ENCODE measurements at regions of chr5 and their contacts with region 1.

Region 1: DNA sequence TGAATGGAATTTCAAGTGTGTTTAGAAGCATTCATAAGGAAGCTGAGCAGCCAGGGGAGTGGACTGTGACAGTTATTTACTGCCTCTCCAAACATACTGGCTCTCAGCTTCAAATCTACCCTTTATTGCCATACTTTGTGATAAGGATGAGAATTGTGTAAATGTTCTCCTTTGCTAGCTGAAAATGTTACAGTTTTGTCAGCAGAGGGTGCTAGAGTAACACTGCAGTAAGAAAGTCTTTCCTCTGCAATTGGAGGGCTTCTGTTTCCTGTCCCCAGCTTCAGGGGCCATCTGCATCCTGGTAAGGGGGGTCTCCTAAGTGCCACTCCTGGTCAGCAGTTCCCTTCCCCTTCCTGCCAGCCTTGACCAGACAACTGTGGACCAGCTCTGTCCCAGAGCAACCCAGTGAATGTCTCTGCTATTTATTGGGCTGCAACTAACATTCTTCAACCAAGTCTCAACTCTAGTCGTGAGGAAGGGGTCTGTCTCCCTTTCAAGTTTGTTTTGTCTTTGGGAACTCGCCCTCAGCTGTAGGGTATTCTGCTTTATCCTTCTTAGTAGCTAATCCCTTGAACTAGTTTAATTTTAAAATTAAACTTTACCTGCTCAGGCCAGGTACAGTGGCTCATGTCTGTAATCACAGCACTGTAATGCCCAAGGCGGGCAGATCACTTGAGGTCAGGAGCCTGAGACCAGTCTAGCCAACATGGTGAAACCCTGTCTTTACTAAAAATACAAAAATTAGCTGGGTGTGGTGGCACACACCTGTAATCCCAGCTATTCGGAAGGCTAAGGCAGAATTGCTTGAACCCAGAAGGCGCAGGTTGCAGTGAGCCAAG is 45.3 kb downstream of the RAPGEF6 start:
- DNase-seq: peak; percentile 20
- ATAC-seq: peak; percentile 93
- H3K4me3 Mint-ChIP-seq: no peak overlapping the region
- H3K27ac Mint-ChIP-seq: no peak overlapping the region
- H3K4me1 Mint-ChIP-seq: peaks cover 22% of the 10 kb centered on the region
- H3K27me3 Mint-ChIP-seq: no peaks in the 10 kb centered on the region
- CTCF ChIP-seq: peak; percentile 60

Region 2: DNA sequence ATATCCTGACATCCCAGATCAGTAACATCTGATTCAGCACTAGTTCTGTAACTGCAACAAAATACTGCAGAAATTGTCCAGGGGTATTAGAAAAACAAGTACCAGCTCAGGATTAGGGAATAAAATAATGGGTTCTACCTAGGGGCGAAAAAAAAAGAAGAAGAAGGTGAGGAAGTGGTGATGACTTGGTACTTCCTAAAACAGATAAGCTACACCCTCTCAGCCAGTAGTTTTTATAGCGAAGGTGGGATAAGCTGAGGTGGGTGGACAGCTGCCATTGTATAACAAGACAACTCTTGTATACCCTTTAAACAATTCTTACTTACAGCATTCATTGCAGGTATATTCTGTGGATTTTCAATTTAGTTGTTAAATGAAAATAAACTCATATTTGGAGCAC is 26.2 kb after region 1 on chr5:
- CTCF ChIA-PET with region 1: interaction called, 11 read pairs
- POLR2A ChIA-PET with region 1: no interaction called
- DNase-seq: no peak
- ATAC-seq: no peak
- H3K4me3 Mint-ChIP-seq: no peak overlapping the region
- H3K27ac Mint-ChIP-seq: no peak overlapping the region
- H3K4me1 Mint-ChIP-seq: peaks cover 16% of the 10 kb centered on the region
- H3K27me3 Mint-ChIP-seq: no peaks in the 10 kb centered on the region
- CTCF ChIP-seq: no peak

Region 3: DNA sequence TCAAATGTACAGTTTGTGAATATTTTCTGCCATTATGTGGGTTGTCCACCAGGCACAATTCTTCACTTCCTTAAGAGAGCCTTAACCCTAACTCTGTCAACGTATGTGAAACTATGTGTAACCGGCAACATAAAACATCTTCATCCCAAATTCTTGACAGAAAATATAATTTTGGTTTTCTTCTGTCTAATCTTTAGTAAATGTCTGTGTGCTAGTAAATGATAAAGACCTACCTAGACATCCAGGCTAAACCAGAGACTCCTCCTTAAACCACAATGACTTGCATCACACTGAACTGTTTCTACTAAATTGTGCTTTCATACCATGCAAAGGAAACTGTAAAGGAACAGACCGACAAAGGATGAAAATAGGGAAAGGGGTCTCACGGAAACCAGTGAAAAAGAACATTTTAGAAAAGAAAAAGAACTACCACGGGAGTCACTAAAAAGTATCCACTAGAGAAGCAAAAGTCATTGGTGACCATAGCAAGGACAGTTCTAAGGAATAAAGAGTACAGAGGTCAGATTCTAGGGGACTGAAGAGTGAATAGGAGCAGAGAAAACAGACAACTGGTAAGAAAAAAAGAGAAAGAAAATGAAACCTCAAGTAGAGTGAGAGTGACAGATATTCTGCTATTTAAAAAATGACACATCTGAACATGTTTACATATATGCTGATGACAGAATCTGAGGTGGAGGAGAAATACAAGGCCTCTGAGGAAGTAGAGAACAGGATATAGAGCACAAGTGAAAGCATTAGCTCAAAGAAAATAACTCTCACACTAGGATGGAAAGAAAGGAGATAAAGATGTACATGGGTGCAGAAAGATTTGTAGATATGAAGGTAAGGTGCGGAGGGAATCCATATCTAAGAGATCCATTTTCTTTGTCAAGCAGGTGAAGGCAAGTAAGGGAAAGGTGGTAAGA is 157.7 kb after region 1 on chr5:
- CTCF ChIA-PET with region 1: no interaction called
- POLR2A ChIA-PET with region 1: no interaction called
- DNase-seq: no peak
- ATAC-seq: no peak
- H3K4me3 Mint-ChIP-seq: no peak overlapping the region
- H3K27ac Mint-ChIP-seq: no peak overlapping the region
- H3K4me1 Mint-ChIP-seq: peaks cover 6% of the 10 kb centered on the region
- H3K27me3 Mint-ChIP-seq: no peaks in the 10 kb centered on the region
- CTCF ChIP-seq: no peak

Region 4: GRCh38 chr5:131796793-131797693 is 207.3 kb after region 1 on chr5 and contains the start of gene FNIP1:
- CTCF ChIA-PET with region 1: interaction called, 11 read pairs
- POLR2A ChIA-PET with region 1: no interaction called
- DNase-seq: peak; percentile 99
- ATAC-seq: peak; percentile 94
- H3K4me3 Mint-ChIP-seq: peak within 1 kb of the TSS; percentile 97
- H3K27ac Mint-ChIP-seq: peak within 1 kb of the TSS; percentile 92
- H3K4me1 Mint-ChIP-seq: peaks cover 18% of the 10 kb centered on the region
- H3K27me3 Mint-ChIP-seq: peaks cover 25% of the 10 kb centered on the region
- CTCF ChIP-seq: no peak
- total RNA-seq, gene FNIP1: 17.2 to 20.0 TPM (median 19.0 TPM) in 3 replicates

Region 5: GRCh38 chr5:131810510-131811249 is 221.0 kb after region 1 on chr5:
- CTCF ChIA-PET with region 1: interaction called, 11 read pairs
- POLR2A ChIA-PET with region 1: no interaction called
- DNase-seq: peak; percentile 15
- ATAC-seq: peak; percentile 75
- H3K4me3 Mint-ChIP-seq: no peak overlapping the region
- H3K27ac Mint-ChIP-seq: no peak overlapping the region
- H3K4me1 Mint-ChIP-seq: peaks cover 7% of the 10 kb centered on the region
- H3K27me3 Mint-ChIP-seq: no peaks in the 10 kb centered on the region; the same call in 1 of the 2 replicates
- CTCF ChIP-seq: no peak

Region 6: GRCh38 chr5:131974956-131975726 is 385.4 kb after region 1 on chr5:
- CTCF ChIA-PET with region 1: no interaction called
- POLR2A ChIA-PET with region 1: no interaction called
- DNase-seq: no peak
- ATAC-seq: peak; percentile 77
- H3K4me3 Mint-ChIP-seq: peak overlapping the region; percentile 12
- H3K27ac Mint-ChIP-seq: no peak overlapping the region
- H3K4me1 Mint-ChIP-seq: peaks cover 19% of the 10 kb centered on the region
- H3K27me3 Mint-ChIP-seq: no peaks in the 10 kb centered on the region; the same call in 1 of the 2 replicates
- CTCF ChIP-seq: no peak

Region 7: GRCh38 chr5:132007399-132008165 is 417.9 kb after region 1 on chr5:
- CTCF ChIA-PET with region 1: interaction called, 20 read pairs
- POLR2A ChIA-PET with region 1: no interaction called
- DNase-seq: peak; percentile 89
- ATAC-seq: peak; percentile 50
- H3K4me3 Mint-ChIP-seq: no peak overlapping the region
- H3K27ac Mint-ChIP-seq: no peak overlapping the region
- H3K4me1 Mint-ChIP-seq: peaks cover 34% of the 10 kb centered on the region
- H3K27me3 Mint-ChIP-seq: peaks cover 24% of the 10 kb centered on the region
- CTCF ChIP-seq: peak; percentile 67

Region 8: GRCh38 chr5:132064738-132065331 is 475.1 kb after region 1 on chr5:
- CTCF ChIA-PET with region 1: interaction called, 13 read pairs
- POLR2A ChIA-PET with region 1: no interaction called
- DNase-seq: peak; percentile 92
- ATAC-seq: peak; percentile 82
- H3K4me3 Mint-ChIP-seq: no peak overlapping the region
- H3K27ac Mint-ChIP-seq: no peak overlapping the region
- H3K4me1 Mint-ChIP-seq: peaks cover 14% of the 10 kb centered on the region
- H3K27me3 Mint-ChIP-seq: no peaks in the 10 kb centered on the region
- CTCF ChIP-seq: peak; percentile 98

Measured in WTC11 (cell line).